Activated naive CD4-positive, alpha-beta T cell treated with anti-CD3 and anti-CD28 coated beads for 36 hours (primary cell): ENCODE measurements at regions of chr1 and their contacts with region 1.

Region 1: GRCh38 chr1:77779529-77780281 is at the start of gene MIGA1:
- DNase-seq: peak; percentile 90
- H3K4me3 Mint-ChIP-seq: peak within 1 kb of the TSS; percentile 88
- H3K27ac Mint-ChIP-seq: peak within 1 kb of the TSS; percentile 85
- H3K4me1 Mint-ChIP-seq: peaks cover 34% of the 10 kb centered on the region
- H3K27me3 Mint-ChIP-seq: no peaks in the 10 kb centered on the region
- total RNA-seq, gene MIGA1: 7.7 to 8.8 TPM

Region 2: GRCh38 chr1:77759071-77760028 is 20.4 kb before region 1 on chr1 and contains the start of gene USP33:
- CTCF ChIA-PET with region 1: interaction called, 4 read pairs
- intact Hi-C with region 1: loop called (anchors 1 kb)
- DNase-seq: peak; percentile 93
- H3K4me3 Mint-ChIP-seq: peak within 1 kb of the TSS; percentile 90
- H3K27ac Mint-ChIP-seq: peak within 1 kb of the TSS; percentile 93
- H3K4me1 Mint-ChIP-seq: peaks cover 46% of the 10 kb centered on the region
- H3K27me3 Mint-ChIP-seq: no peaks in the 10 kb centered on the region
- total RNA-seq, gene USP33: 32.6 to 35.6 TPM